Colonic mucosa (tissue), 4 donors: ENCODE measurements at regions of chr15 and their contacts with region 1.

Region 1: GRCh38 chr15:69058830-69059556 is 44.5 kb downstream of the NOX5 start:
- DNase-seq: peak; percentile 93
- H3K4me3 ChIP-seq: no peak overlapping the region
- H3K27ac ChIP-seq: no peak overlapping the region
- H3K4me1 ChIP-seq: peaks cover 6% of the 10 kb centered on the region
- H3K27me3 ChIP-seq: no peaks in the 10 kb centered on the region
- CTCF ChIP-seq: peak; percentile 78

Region 2: GRCh38 chr15:69000725-69001503 is 58.1 kb before region 1 on chr15:
- intact Hi-C with region 1: no loop called
- DNase-seq: no peak
- H3K4me3 ChIP-seq: no peak overlapping the region
- H3K27ac ChIP-seq: no peak overlapping the region
- H3K4me1 ChIP-seq: no peaks in the 10 kb centered on the region
- H3K27me3 ChIP-seq: no peaks in the 10 kb centered on the region
- CTCF ChIP-seq: no peak

Region 3: GRCh38 chr15:69141286-69141701 is 82.3 kb after region 1 on chr15:
- intact Hi-C with region 1: no loop called
- DNase-seq: no peak
- H3K4me3 ChIP-seq: no peak overlapping the region
- H3K27ac ChIP-seq: no peak overlapping the region
- H3K4me1 ChIP-seq: peaks cover 8% of the 10 kb centered on the region
- H3K27me3 ChIP-seq: no peaks in the 10 kb centered on the region
- CTCF ChIP-seq: no peak

Region 4: DNA sequence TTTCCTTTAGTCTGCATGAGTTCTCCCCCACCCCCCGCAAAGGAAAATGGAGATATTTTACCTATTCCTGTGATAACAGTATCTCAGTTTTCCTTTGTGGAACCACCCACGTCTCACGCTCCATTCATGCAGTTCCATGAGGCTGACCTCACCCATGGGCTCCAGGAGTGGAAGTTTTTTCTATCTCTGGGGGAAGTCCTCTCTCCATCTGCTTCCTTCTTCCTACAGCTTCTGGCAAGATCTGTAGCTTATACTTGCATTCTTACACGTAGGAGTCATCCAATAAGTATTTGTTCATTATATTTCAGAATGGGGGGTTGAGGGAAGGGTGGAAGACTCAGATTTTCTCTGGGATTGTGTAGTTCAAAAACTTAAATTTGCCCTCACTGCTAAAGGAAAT is 95.7 kb after region 1 on chr15:
- intact Hi-C with region 1: loop called (anchors 10 kb)
- DNase-seq: no peak
- H3K4me3 ChIP-seq: no peak overlapping the region
- H3K27ac ChIP-seq: no peak overlapping the region
- H3K4me1 ChIP-seq: no peaks in the 10 kb centered on the region
- H3K27me3 ChIP-seq: no peaks in the 10 kb centered on the region
- CTCF ChIP-seq: no peak

Region 5: DNA sequence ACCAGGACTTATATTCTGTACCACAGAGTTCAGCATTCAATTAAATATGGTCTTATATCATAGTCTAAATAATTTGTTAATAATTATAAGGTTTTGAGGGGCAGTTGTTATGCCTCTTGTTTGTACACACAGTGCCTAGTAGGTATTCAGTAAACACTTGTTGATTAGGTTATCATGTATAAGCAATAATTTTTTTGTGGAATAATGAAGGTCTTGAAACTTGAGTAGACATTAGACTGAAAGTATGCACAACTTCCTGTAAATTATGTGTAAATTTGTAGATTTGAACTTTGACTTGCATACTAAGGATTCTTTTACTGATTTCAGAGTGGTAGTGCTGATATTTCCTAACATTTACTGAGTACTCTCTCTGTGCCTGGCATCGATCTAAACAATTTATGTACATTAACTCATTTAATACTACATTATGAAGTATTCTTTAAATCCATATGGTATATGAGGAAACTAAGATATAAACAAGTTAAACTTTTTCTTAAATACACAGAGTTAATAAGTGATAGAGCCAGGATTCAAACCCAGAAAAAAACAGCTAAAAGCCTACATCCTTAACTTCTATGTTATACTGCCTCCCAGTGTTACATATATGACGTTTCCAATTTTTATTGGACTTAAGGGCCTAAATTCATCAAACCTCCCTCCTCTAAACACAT is 166.5 kb after region 1 on chr15:
- intact Hi-C with region 1: loop called (anchors 1 kb)
- DNase-seq: no peak
- H3K4me3 ChIP-seq: no peak overlapping the region
- H3K27ac ChIP-seq: peak overlapping the region; percentile 30
- H3K4me1 ChIP-seq: no peaks in the 10 kb centered on the region
- H3K27me3 ChIP-seq: no peaks in the 10 kb centered on the region
- CTCF ChIP-seq: no peak

Region 6: GRCh38 chr15:69265347-69265955 is 206.5 kb after region 1 on chr15:
- intact Hi-C with region 1: loop called (anchors 2 kb)
- DNase-seq: no peak
- H3K4me3 ChIP-seq: no peak overlapping the region
- H3K27ac ChIP-seq: no peak overlapping the region
- H3K4me1 ChIP-seq: no peaks in the 10 kb centered on the region
- H3K27me3 ChIP-seq: no peaks in the 10 kb centered on the region
- CTCF ChIP-seq: peak; percentile 52

Region 7: GRCh38 chr15:69394556-69395282 is 335.7 kb after region 1 on chr15:
- intact Hi-C with region 1: loop called (anchors 2 kb)
- DNase-seq: peak; percentile 82
- H3K4me3 ChIP-seq: no peak overlapping the region
- H3K27ac ChIP-seq: no peak overlapping the region
- H3K4me1 ChIP-seq: no peaks in the 10 kb centered on the region
- H3K27me3 ChIP-seq: no peaks in the 10 kb centered on the region
- CTCF ChIP-seq: peak; percentile 93